Right cardiac atrium (tissue), 5 donors: ENCODE measurements at regions of chr15 and their contacts with region 1.

Region 1: DNA sequence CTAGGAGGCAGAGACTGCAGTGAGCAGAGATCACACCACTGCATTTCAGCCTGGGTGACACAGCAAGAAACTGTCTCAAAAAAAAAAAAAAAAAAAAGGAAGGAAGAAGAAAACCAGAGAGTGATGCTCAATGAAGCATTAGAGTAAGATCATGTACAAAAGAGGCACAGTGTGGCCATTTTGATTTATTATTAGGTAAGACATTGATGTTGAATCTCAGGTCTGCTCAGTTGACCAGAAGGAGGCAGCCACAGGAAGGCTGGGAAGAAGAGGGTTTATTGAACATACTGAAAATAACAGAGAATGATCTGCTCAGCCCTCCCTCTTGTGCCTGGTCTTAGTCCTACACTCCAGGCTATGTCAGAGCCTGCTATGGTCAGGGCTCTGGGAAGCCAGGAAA is 15.6 kb downstream of the LRRK1 start:
- DNase-seq: no peak
- ATAC-seq: no peak
- H3K4me3 ChIP-seq: no peak overlapping the region
- H3K27ac ChIP-seq: no peak overlapping the region
- H3K4me1 ChIP-seq: no peaks in the 10 kb centered on the region
- H3K27me3 ChIP-seq: no peaks in the 10 kb centered on the region

Region 2: DNA sequence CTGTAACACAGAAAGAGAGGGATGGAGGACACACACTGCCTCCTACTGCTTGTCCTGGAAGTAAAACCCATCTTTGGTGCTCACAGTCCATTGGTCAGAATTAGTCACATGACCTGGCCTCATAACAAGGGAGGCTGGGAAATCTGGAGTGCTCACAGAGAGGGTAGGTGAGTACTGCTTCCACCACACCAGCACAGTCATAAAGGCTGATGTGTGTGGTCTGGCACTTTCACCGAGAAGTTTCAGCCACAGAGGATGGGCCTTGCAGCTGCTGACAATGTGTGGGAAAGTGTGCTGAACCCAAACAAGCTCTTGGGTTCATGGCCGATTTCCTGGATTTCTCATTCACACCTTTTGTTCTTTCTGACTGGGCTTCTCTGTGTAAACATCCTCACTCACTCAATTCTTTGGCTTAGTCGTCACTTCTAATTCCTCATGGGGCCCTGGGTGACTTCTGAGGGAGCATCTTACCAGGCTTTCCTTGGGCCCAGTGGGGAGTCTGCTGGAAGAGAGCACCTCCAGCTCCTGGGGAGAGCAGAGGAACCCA is 231.6 kb before region 1 on chr15:
- intact Hi-C with region 1: no loop called
- DNase-seq: no peak
- ATAC-seq: no peak
- H3K4me3 ChIP-seq: no peak overlapping the region
- H3K27ac ChIP-seq: no peak overlapping the region
- H3K4me1 ChIP-seq: no peaks in the 10 kb centered on the region
- H3K27me3 ChIP-seq: no peaks in the 10 kb centered on the region

Region 3: GRCh38 chr15:100973351-100974111 is 38.8 kb after region 1 on chr15:
- intact Hi-C with region 1: loop called in 1 of 4 experiments (anchors 5 kb)
- DNase-seq: no peak
- ATAC-seq: peak; percentile 24 to 31
- H3K4me3 ChIP-seq: peak overlapping the region; percentile 15
- H3K27ac ChIP-seq: no peak overlapping the region
- H3K4me1 ChIP-seq: no peaks in the 10 kb centered on the region
- H3K27me3 ChIP-seq: no peaks in the 10 kb centered on the region

Region 4: GRCh38 chr15:100994597-100995446 is 60.1 kb after region 1 on chr15:
- intact Hi-C with region 1: no loop called
- DNase-seq: no peak
- ATAC-seq: no peak
- H3K4me3 ChIP-seq: no peak overlapping the region
- H3K27ac ChIP-seq: no peak overlapping the region
- H3K4me1 ChIP-seq: no peaks in the 10 kb centered on the region
- H3K27me3 ChIP-seq: no peaks in the 10 kb centered on the region

Region 5: DNA sequence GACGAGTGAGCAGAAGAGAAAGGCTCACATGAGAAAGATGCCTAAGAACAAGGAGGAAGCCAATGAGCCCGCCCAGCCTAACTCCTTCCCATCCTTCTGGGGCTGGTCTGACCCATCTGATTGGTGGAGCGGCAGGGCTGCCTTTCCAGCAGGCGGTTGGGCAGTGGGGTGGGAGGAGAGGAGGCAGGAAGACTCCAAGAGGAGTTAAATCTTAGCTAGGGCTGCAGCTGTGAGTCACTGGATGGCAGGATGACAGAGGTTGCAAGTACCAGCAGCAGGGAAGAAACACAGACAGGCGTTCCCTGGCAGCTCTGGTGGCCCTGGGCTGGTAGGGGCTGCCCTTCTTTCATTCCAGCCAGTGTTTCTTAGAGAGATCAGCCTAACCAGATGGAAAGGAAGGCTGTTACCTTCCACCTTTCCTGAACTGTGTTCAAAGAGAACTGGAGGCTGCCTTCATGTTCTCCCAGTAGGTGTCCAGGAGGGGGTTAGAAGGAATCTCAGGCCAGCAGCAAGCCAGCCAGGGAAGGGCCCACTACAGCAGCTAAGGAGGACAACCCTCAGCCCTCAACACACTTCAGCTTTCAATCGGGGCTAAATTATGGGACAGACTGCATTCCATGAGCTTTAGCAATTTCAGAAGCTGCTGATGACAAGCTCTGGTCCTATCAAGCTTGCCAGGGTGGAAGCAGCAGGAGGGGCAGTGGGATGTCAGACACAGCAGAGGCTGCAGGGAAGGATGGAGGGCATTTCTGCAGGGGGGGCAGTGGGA is 266.9 kb after region 1 on chr15:
- intact Hi-C with region 1: no loop called
- DNase-seq: peak; percentile 95 to 96 (median 96)
- ATAC-seq: peak; percentile 95 to 98
- H3K4me3 ChIP-seq: no peak overlapping the region
- H3K27ac ChIP-seq: peak overlapping the region; percentile 65
- H3K4me1 ChIP-seq: peaks cover 21% of the 10 kb centered on the region
- H3K27me3 ChIP-seq: no peaks in the 10 kb centered on the region